H1 (cell line): ENCODE measurements at regions of chr11 and their contacts with region 1.

Region 1: GRCh38 chr11:6612213-6613041 is at the start of gene TAF10:
- DNase-seq: peak in 1 of 2 experiments; percentile 92
- H3K4me3 ChIP-seq: peak within 1 kb of the TSS; percentile 67 to 85 (median 76)
- H3K27ac ChIP-seq: peak within 1 kb of the TSS; percentile 94
- H3K4me1 ChIP-seq: peaks cover 0 to 11% (median 5%) of the 10 kb centered on the region in 4 experiments; a peak in 6 of 7 replicates
- H3K27me3 ChIP-seq: no peaks in the 10 kb centered on the region
- CTCF ChIP-seq: peak; percentile 70 to 87 (median 83)
- EP300 ChIP-seq: no peak
- POLR2A ChIP-seq: peak; percentile 75 to 92
- RAD21 ChIP-seq: peak; percentile 41 to 50
- total RNA-seq, gene TAF10: 128 and 153 TPM in 2 replicates

Region 2: DNA sequence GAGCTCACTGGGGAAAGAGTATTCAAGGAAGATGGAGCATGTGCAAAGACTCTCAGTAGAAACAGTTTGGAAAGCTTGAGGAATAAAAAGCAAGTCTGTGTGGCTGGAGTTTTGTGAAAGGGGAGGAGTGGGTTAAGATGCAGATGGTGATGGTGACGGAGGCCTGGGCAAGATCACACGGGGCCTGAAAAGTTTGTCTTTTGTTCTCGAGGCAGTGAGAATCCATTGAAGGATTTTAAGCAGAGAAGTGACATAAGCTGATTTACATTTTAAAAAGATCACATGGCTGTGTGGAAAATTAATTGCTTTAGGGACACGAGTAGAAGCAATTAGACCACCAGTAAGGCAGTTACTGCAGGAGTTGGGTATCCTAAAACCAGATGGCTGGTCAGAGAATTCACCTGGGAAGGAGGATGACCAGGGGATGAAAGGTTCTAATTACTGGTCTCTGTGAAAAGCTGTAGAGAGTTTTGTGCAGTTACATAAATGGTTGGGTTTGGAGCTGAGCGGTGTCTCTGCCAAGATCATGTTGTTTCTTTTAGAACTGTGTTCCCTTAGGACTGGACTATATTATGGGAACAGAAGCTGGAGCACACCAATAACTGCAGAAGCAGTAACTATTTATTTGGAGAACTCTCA is 16.1 kb before region 1 on chr11:
- CTCF ChIA-PET with region 1: interaction called, 11 read pairs
- POLR2A ChIA-PET with region 1: interaction called, 22 read pairs
- DNase-seq: peak in 1 of 2 experiments; percentile 16
- H3K4me3 ChIP-seq: no peak overlapping the region
- H3K27ac ChIP-seq: no peak overlapping the region
- H3K4me1 ChIP-seq: no peaks in the 10 kb centered on the region
- H3K27me3 ChIP-seq: no peaks in the 10 kb centered on the region
- CTCF ChIP-seq: no peak
- EP300 ChIP-seq: no peak
- POLR2A ChIP-seq: no peak
- RAD21 ChIP-seq: no peak

Region 3: DNA sequence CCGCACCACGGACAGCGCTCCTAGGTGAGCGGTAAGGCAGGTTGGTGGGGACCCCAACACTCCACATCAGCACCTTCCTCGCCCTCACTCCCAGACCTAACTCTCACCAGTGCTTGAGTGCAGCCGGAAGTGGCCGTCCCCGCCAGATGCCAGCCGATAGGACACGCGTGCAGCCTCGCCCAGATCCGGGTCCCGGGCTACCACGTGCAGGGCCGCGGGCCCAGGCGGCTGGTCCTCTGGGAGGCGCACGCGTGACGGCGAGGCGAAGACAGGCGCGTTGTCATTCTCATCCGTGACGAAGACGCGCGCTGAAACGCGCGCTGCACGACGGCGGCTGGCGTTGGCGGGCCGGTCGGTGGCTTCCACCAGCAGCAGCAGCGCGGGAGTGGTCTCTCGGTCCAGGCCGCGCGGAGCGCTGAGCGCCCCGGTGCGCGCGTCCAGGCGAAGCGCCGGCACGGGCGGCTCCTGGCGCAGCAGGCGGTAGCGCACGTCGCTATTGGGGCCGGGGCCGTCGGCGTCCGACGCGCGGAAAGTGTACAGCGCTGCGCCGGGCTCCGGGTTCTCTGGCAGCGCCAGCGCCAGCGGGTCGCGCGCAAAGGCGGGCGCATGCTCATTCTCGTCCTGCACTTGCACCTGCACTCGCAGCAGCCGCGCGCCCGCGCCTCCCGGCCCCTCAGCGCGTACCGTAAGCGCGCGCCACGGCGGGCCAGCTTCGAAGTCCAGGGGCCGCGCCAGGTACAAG is 17.6 kb after region 1 on chr11:
- CTCF ChIA-PET with region 1: interaction called, 23 read pairs
- POLR2A ChIA-PET with region 1: interaction called, 17 read pairs
- DNase-seq: peak in 1 of 2 experiments; percentile 82
- H3K4me3 ChIP-seq: peak overlapping the region; percentile 31 to 60 (median 40)
- H3K27ac ChIP-seq: no peak overlapping the region
- H3K4me1 ChIP-seq: peaks cover 0 to 6% (median 2%) of the 10 kb centered on the region in 4 experiments; a peak in 3 of 7 replicates
- H3K27me3 ChIP-seq: peaks cover 13 to 43% (median 34%) of the 10 kb centered on the region in 4 experiments
- CTCF ChIP-seq: no peak
- EP300 ChIP-seq: no peak
- POLR2A ChIP-seq: no peak
- RAD21 ChIP-seq: peak in 1 of 2 experiments; percentile 1; a peak in 1 of 4 replicates

Region 4: GRCh38 chr11:6648501-6648900 is 36.1 kb after region 1 on chr11:
- CTCF ChIA-PET with region 1: no interaction called
- POLR2A ChIA-PET with region 1: interaction called, 15 read pairs
- DNase-seq: no peak
- H3K4me3 ChIP-seq: no peak overlapping the region
- H3K27ac ChIP-seq: no peak overlapping the region
- H3K4me1 ChIP-seq: peaks cover 3 to 10% (median 5%) of the 10 kb centered on the region in 4 experiments; a peak in 6 of 7 replicates
- H3K27me3 ChIP-seq: peaks cover 0 to 4% (median 1%) of the 10 kb centered on the region in 4 experiments; a peak in 2 of 7 replicates
- CTCF ChIP-seq: no peak
- EP300 ChIP-seq: no peak
- POLR2A ChIP-seq: no peak
- RAD21 ChIP-seq: no peak

Region 5: DNA sequence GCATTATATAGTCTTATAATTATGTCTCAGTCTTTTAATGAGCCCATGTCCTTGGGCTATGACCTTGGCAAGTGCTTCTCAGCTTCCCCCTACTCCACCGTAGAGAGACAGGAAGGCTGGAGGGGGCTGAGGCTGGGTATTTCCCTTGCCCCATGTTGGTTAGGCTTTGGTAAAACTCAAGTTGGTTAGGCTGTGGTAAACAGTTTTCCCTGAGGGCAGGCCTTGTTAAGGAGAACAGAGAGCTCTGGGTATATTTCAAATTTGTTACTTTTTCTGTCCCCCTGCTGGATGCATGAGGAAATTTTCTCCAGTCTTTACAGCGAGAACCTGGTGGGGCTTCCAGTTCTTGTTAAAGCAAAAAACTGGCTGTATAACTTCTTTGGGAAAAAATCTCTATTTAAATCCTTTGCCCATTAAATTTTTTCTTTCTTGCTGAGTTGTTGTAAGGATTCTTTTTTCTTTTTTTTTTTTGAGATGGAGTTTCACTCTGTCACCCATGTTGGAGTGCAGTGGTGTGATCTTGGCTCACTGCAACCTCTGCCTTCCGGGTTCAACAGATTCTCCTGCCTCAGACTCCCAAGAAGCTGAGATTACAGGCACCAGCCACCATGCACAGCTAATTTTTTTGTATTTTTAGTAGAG is 55.4 kb after region 1 on chr11:
- CTCF ChIA-PET with region 1: interaction called, 11 read pairs
- POLR2A ChIA-PET with region 1: interaction called, 6 read pairs
- DNase-seq: no peak
- H3K4me3 ChIP-seq: no peak overlapping the region
- H3K27ac ChIP-seq: no peak overlapping the region
- H3K4me1 ChIP-seq: no peaks in the 10 kb centered on the region
- H3K27me3 ChIP-seq: 0 out of 7 replicates have a peak, but pooled peaks cover 0 to 3% (median 0%) of the 10 kb centered on the region in 4 experiments
- CTCF ChIP-seq: peak in 2 of 3 experiments; percentile 50 to 65; a peak in 2 of 4 replicates
- EP300 ChIP-seq: no peak
- POLR2A ChIP-seq: no peak
- RAD21 ChIP-seq: peak; percentile 39 to 50